Activated CD4-positive, alpha-beta T cell treated with anti-CD3 and anti-CD28 coated beads, Interleukin-2, amount 10 ng/mL, durations not matched to agents 24 days and 14 days (primary cell): ENCODE measurements at regions of chr19 and their contacts with region 1.

Region 1: GRCh38 chr19:41449079-41449864 is 6.3 kb downstream of the ERICH4 start:
- DNase-seq: peak; percentile 92
- H3K4me3 Mint-ChIP-seq: peak overlapping the region; percentile 85
- H3K27ac Mint-ChIP-seq: peak overlapping the region; percentile 60
- H3K4me1 Mint-ChIP-seq: peaks cover 23% of the 10 kb centered on the region
- H3K27me3 Mint-ChIP-seq: peaks cover 2% of the 10 kb centered on the region

Region 2: GRCh38 chr19:41531438-41532311 is 82.4 kb after region 1 on chr19:
- intact Hi-C with region 1: loop called (anchors 1 kb)
- DNase-seq: peak; percentile 96
- H3K4me3 Mint-ChIP-seq: peak overlapping the region; percentile 84
- H3K27ac Mint-ChIP-seq: peak overlapping the region; percentile 88
- H3K4me1 Mint-ChIP-seq: peaks cover 61% of the 10 kb centered on the region
- H3K27me3 Mint-ChIP-seq: peaks cover 4% of the 10 kb centered on the region

Region 3: DNA sequence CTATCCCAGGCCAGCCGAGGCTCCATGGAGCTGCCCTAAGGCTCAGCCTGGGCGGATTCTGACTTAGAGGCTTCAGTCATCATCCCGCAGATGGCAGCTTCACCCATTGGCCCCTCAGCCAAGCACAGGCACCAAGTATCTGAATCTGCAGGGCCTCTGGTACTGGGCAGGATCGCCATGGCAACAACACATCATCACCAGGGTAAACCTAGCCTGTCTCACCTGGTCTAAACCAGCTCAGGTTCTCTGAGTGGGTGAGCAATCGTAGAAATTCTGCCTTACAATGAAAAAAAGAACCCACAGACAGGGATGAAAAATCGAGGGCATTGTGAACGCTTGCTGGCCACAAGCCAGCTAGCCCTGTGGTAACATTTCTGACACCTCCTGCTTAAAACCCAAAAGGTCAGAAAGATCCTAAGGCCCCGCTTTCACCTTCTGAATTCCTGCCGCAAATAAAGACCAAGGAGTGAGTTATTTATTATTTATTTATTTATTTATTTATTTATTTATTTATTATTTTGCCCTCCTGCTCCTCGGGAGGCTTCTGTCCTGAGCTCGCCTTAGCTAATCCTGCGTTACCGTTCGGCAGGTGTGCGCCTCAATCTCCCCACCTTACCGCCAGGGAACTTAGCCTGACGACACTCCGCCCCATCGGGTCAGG is 114.7 kb after region 1 on chr19:
- intact Hi-C with region 1: loop called (anchors 2 kb)
- DNase-seq: peak; percentile 85
- H3K4me3 Mint-ChIP-seq: peak overlapping the region; percentile 74
- H3K27ac Mint-ChIP-seq: peak overlapping the region; percentile 76
- H3K4me1 Mint-ChIP-seq: peaks cover 57% of the 10 kb centered on the region
- H3K27me3 Mint-ChIP-seq: no peaks in the 10 kb centered on the region

Region 4: GRCh38 chr19:41570639-41571112 is 121.4 kb after region 1 on chr19:
- intact Hi-C with region 1: loop called (anchors 1 kb)
- DNase-seq: peak; percentile 95
- H3K4me3 Mint-ChIP-seq: no peak overlapping the region
- H3K27ac Mint-ChIP-seq: peak overlapping the region; percentile 60
- H3K4me1 Mint-ChIP-seq: peaks cover 22% of the 10 kb centered on the region
- H3K27me3 Mint-ChIP-seq: no peaks in the 10 kb centered on the region

Region 5: DNA sequence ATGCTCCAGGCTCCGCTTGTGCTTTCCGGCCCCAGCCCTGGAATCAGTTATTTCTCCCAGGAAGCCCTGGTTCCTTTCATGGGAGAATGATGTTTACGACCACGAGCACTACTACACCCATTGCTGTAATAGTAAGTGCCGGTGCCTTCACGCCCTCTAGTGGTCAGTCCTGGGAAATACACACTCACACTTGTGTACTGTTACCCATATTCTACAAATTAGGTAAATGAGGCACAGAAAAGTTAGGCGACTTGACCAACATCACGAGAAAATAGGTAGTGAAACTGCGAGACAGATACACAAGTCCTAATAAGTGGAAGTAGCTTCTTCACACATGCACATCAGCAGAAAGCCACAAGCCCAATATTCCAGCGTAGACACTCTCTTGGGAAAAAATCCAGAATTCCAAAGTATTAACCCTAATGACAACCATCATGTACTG is 148.3 kb after region 1 on chr19:
- intact Hi-C with region 1: loop called (anchors 1 kb)
- DNase-seq: peak; percentile 92
- H3K4me3 Mint-ChIP-seq: peak overlapping the region; percentile 37
- H3K27ac Mint-ChIP-seq: peak overlapping the region; percentile 61
- H3K4me1 Mint-ChIP-seq: peaks cover 12% of the 10 kb centered on the region
- H3K27me3 Mint-ChIP-seq: peaks cover 20% of the 10 kb centered on the region